GM10248 (cell line): ENCODE measurements at regions of chr19 and their contacts with region 1.

Region 1: DNA sequence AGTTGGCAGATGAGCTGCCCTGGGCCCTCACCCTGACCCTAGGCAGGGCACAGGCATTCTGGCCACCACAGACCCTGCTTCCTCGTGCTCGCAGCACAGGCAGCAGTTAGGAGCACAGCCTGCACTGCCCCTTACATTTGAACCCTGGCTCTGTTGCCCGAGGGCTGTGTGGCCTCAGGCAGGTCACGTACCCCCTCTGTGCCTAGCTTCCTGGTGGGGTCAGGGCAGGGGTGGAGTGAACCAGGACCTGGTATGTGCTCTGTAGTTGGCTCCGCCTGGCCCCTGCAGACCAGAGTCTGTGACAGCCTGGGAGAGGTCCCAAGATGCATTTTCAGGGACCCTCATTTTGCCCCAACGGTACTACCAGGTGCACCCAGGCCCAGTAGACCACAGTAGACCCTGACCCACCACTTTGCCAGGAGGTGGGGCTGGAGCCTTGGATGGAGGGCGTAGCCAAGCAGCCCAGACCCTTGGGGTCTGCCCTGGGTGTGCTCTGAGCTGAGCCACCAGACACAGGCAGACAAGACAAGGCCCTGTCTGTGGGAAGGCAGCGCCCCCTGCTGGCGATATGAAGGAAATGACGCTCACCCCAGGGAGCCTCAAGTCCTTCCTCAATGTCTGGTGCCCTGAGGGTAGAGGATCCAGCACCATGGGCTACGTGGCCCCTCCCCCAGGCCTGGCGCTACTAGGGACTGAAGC is 9.1 kb downstream of the LYL1 start:
- DNase-seq: peak; percentile 92
- CTCF ChIP-seq: peak; percentile 92

Region 2: GRCh38 chr19:12983542-12984142 is 109.9 kb before region 1 on chr19:
- CTCF ChIA-PET with region 1: interaction called, 183 read pairs
- POLR2A ChIA-PET with region 1: no interaction called
- DNase-seq: peak; percentile 88
- CTCF ChIP-seq: peak; percentile 95

Region 3: DNA sequence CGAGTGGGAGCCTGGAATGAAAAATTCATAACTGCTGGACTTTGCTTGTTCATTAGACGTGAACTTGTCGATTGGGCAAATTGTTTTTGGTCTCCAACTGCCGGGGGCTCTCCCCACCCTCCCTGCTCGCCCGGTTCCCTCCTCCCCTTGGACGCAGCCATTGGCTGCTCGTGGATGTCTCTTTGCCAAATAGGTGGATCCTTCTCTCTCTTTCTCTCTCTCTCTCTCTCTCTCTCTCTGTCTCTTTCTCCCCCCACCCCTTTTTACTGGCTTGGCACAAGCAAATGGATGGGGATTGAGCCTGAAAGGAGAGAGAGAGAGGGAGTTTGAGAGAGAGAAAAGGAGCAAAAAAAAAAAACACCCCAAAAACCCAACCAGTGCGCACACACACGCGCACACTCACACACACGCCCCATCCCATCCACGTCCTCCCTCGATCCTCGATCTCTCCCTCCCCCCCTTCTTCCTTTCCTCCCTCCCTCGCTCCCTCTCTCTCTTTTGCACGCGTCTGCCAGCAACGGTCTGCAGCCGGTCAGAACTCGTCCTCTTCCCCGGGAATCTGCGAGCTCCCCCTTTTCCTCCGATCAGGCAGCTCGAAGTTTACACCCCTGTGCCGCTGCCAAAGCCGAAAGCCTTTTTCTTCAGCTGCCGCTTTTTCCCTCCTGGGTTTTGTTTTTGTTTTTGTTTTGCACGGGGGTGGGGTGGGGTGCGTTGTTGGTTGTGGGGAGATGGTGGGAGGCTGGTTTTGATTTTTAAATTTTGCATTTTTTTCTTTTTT is 70.5 kb before region 1 on chr19:
- CTCF ChIA-PET with region 1: interaction called, 14 read pairs
- POLR2A ChIA-PET with region 1: no interaction called
- DNase-seq: peak; percentile 56
- CTCF ChIP-seq: no peak

Region 4: GRCh38 chr19:13051267-13052165 is 42.0 kb before region 1 on chr19:
- CTCF ChIA-PET with region 1: interaction called, 13 read pairs
- POLR2A ChIA-PET with region 1: no interaction called
- DNase-seq: peak; percentile 40
- CTCF ChIP-seq: no peak

Region 5: GRCh38 chr19:13082192-13083007 is 11.2 kb before region 1 on chr19:
- CTCF ChIA-PET with region 1: interaction called, 29 read pairs
- POLR2A ChIA-PET with region 1: no interaction called
- DNase-seq: no peak
- CTCF ChIP-seq: peak; percentile 7